HepG2 (cell line): ENCODE measurements at regions of chr2 and their contacts with region 1.

Region 1: DNA sequence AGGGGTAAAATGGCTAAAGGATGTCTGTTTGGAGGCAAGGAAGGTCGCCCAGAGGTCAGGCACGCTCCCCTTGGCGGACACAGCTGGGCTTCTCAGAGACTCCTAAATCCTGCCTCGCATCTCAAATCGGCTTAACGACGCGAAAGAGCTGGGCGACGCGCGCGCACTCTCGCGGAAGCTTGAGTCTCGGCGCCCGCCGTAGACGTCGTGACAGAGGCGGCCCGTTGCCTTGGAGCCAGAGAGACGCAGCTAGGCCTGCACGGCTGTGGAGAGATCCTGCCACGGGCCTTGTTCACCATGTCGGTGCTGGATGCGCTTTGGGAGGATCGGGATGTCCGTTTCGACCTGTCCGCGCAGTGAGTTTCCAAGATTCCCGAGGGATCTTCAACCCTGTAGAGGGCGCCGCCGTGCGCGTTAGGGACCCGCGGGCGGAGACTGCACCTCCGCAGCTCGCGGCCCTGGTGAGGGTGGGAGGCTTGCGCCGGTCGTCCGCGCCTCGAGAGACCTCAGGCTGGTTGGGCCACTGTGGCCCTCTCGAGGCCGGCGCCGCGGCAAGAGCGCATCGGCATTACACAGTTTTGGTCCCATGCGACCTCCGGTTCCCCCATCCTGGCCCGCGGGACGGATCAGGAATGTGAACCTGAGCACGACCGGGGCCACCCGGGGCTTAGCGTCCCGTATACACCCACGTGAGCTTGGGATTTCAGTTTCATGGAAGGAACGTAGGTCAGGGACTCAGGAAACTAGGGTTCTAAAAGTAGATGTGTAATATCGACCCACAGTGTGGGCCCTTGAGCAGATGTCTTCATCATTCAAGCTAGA is at the start of gene BBS5:
- DNase-seq: peak; percentile 64
- ATAC-seq: peak; percentile 95
- H3K4me3 ChIP-seq: peak within 1 kb of the TSS; percentile 62 to 85 (median 85)
- H3K27ac ChIP-seq: no peak within 1 kb of the TSS
- H3K4me1 ChIP-seq: peaks cover 55% of the 10 kb centered on the region
- H3K27me3 ChIP-seq: no peaks in the 10 kb centered on the region; a peak in 1 of 5 replicates
- CTCF ChIP-seq: peak; percentile 97
- EP300 ChIP-seq: no peak
- POLR2A ChIP-seq: peak; percentile 39 to 55
- RAD21 ChIP-seq: peak; percentile 82
- total RNA-seq, gene BBS5: 3.3 and 4.5 TPM in 2 replicates

Region 2: GRCh38 chr2:169438460-169439072 is 40.9 kb before region 1 on chr2:
- CTCF ChIA-PET with region 1: no interaction called
- POLR2A ChIA-PET with region 1: no interaction called
- in situ Hi-C with region 1: no loop called
- intact Hi-C with region 1: no loop called
- DNase-seq: no peak
- ATAC-seq: no peak
- H3K4me3 ChIP-seq: no peak overlapping the region
- H3K27ac ChIP-seq: no peak overlapping the region
- H3K4me1 ChIP-seq: 0 out of 2 replicates have a peak, but pooled peaks cover 4% of the 10 kb centered on the region
- H3K27me3 ChIP-seq: 0 out of 5 replicates have a peak, but pooled peaks cover 0 to 4% of the 10 kb centered on the region in 2 experiments
- CTCF ChIP-seq: no peak
- EP300 ChIP-seq: no peak
- POLR2A ChIP-seq: no peak
- RAD21 ChIP-seq: no peak

Region 3: GRCh38 chr2:169520896-169521295 is 41.4 kb after region 1 on chr2:
- CTCF ChIA-PET with region 1: no interaction called
- POLR2A ChIA-PET with region 1: no interaction called
- in situ Hi-C with region 1: no loop called
- intact Hi-C with region 1: loop called (anchors 5 kb)
- DNase-seq: no peak
- ATAC-seq: no peak
- H3K4me3 ChIP-seq: no peak overlapping the region
- H3K27ac ChIP-seq: no peak overlapping the region
- H3K4me1 ChIP-seq: peaks cover 19% of the 10 kb centered on the region
- H3K27me3 ChIP-seq: no peaks in the 10 kb centered on the region
- CTCF ChIP-seq: no peak
- EP300 ChIP-seq: no peak
- POLR2A ChIP-seq: no peak
- RAD21 ChIP-seq: no peak